ENCODE measurements at regions of chr11 and their contacts with region 1.

Region 1: GRCh38 chr11:126355324-126355925 is at the start of gene ST3GAL4:
- DNase-seq: peak; percentile 68 to 86 (median 76)
- H3K4me3 ChIP-seq: peak within 1 kb of the TSS; percentile 60 to 97 (median 78)
- H3K27ac ChIP-seq: peak within 1 kb of the TSS; percentile 63 to 98 (median 91)
- H3K27me3 ChIP-seq: no peaks in the 10 kb centered on the region
- CTCF ChIP-seq: peak in 8 of 56 donors; percentile 10 to 29 (median 20)
- total RNA-seq, gene ST3GAL4: 19.8 to 70.4 (median 32.7) TPM

Region 2: DNA sequence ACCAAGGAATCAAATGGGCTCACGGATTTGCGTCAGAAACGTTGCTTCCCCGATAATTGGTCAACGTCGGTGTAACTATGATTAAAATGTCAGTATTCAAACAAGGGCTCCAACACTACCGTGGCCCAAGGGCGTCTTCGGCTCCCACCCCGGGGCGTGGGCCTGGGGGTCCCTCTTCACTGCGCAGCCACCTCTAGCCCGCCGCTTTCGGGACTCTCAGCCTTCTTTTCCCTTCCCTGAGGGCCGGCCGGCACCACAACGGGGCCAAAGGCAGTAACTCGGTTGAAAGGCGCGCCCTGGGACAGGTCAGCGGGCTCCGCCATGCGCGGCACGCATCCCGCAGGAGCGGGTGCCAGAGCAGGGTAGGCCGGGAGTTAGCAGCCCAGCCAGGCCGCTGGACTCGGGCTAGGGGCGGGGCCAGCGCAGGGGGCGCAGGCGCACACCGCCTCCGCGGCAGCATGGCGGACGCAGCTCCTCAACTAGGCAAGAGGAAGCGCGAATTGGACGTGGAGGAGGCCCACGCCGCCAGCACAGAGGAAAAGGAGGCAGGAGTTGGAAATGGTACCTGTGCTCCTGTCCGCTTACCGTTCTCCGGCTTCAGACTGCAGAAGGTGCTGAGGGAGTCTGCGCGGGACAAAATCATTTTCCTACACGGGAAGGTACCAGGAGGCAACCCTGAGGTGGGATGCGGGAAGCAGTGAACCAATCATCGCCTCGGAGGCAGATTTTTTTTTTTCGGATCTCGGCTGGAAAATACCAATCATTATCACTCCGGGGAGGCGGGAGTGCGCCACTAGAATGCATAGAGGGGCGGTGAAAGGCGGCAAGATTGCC is 51.6 kb before region 1 on chr11 and contains the start of gene DCPS:
- intact Hi-C with region 1: loop called in 1 of 2 experiments (anchors 2 kb)
- DNase-seq: peak; percentile 83 to 97 (median 90)
- H3K4me3 ChIP-seq: peak within 1 kb of the TSS; percentile 63 to 94 (median 79)
- H3K27ac ChIP-seq: peak within 1 kb of the TSS; percentile 70 to 98 (median 90)
- H3K27me3 ChIP-seq: no peaks in the 10 kb centered on the region
- CTCF ChIP-seq: peak in 29 of 56 donors; percentile 3 to 59 (median 23)
- total RNA-seq, gene DCPS: 5.5 to 17.5 (median 10.9) TPM

Region 3: GRCh38 chr11:126332131-126332711 is 23.2 kb before region 1 on chr11:
- intact Hi-C with region 1: no loop called
- DNase-seq: peak in 6 of 10 donors; percentile 33 to 78 (median 52)
- H3K4me3 ChIP-seq: peak overlapping the region in 1 of 59 donors; percentile 7
- H3K27ac ChIP-seq: no peak overlapping the region
- H3K27me3 ChIP-seq: no peaks in the 10 kb centered on the region
- CTCF ChIP-seq: no peak

Region 4: DNA sequence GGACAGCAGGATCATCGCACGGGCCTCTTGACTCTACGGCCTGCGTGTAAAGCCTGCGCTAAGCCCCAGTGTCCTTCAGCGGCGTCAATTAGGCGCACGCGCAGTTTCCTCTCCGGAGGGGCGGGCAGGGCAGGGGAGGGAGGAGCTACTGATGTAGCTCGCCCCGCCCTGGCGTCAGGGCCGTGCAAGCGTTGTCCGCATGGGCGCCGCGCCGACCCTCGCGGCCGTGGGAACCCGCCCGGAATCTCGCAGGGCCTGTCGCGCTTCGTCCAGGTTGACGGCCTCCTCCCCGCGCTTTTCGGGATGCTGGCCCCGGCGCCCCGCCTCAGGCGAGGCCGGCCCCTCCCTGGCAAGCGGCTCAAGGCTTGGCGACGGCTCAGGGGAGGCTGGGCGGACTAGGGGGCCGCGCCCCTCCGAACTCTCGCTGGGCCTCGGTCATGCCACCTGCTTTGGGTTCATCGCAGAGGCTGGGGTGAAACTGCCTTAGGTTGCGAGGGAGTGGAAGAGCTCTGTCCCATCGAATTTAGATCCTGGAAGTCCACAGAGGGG is 61.2 kb after region 1 on chr11:
- intact Hi-C with region 1: loop called (anchors 1 kb)
- DNase-seq: peak; percentile 87 to 91 (median 90)
- H3K4me3 ChIP-seq: peak overlapping the region; percentile 33 to 73 (median 60)
- H3K27ac ChIP-seq: peak overlapping the region; percentile 55 to 95 (median 89)
- H3K27me3 ChIP-seq: no peaks in the 10 kb centered on the region
- CTCF ChIP-seq: peak in 21 of 56 donors; percentile 4 to 45 (median 21)

Region 5: DNA sequence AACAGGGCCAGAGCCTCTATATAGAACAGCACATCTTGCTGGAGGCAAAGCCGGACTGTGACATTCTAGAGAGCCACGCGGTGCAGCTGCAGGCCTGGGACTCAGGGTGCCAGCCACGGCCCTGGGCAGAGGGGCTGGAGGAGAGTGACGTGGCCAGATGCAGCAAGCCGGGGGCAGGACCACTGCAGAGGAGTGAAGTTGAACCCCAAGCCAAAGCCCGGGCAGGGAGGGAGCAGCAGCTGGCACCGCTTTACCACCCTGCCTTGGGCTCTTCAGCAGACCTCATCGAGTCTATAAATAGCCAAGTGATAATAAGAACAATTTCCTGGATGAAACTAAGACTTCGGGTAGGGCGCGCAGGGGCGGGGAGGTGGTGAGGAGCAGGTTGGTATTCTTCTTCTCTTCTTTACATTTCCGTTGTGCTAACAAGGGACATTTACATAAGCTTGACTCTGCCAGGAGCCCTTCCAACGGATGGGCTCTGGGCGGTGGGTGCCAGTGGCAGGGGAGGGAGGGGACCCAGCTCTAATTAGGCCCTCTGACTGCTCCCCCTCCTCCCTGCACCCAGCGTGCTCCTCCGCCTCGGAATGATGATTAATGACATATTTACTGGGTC is 110.3 kb after region 1 on chr11:
- intact Hi-C with region 1: no loop called
- DNase-seq: peak in 1 of 10 donors; percentile 22
- H3K4me3 ChIP-seq: no peak overlapping the region
- H3K27ac ChIP-seq: peak overlapping the region in 44 of 59 donors; percentile 15 to 75 (median 54)
- H3K27me3 ChIP-seq: no peaks in the 10 kb centered on the region
- CTCF ChIP-seq: no peak